ENCODE measurements at regions of chr12 and their contacts with region 1.

Region 1: DNA sequence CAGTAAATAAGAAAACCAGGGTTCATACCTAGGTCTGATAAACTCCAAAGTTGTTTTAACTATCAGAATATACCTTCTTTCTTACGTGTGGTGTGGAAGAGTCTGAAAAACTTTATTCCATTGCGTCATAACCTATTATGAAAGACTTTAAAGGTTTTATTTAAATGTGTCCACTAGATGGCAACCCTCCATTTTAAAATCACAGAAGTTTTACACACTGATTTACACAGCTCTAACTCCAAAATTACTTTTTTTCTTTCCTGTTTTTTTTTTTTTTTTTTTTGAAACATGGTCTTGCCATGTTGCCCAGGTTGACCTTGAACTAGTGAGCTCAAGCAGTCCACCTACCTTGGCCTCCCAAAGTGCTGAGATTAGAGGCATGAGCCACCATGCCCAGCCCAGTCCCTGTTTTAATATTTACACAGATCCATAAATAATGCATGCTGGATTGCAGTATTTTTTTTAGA is 17.3 kb upstream of the TMPRSS12 start:
- DNase-seq: no peak
- ATAC-seq: peak; percentile 80
- H3K4me3 Mint-ChIP-seq: no peak overlapping the region
- H3K27ac Mint-ChIP-seq: no peak overlapping the region
- H3K4me1 Mint-ChIP-seq: peaks cover 6% of the 10 kb centered on the region
- H3K27me3 Mint-ChIP-seq: no peaks in the 10 kb centered on the region
- CTCF ChIP-seq: no peak

Region 2: DNA sequence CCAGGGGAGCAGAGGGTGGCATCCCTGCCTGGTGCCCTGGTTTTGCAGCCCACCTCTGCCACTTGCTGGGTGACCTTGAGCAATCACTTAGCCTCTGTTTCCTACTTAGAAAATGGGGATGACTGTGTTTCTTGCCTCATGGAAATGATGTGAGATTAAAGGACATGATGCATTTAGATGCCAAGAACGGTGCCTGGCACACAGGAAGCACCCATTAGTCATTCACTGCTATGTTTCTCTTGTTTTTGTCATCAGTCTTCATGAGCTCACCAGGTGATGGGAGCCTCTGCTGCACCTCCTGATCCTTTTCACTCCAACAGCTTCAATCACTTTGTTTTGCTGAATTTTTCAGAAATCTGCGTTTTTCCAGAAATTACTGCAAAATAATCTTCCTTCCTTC is 85.1 kb before region 1 on chr12:
- CTCF ChIA-PET with region 1: no interaction called
- POLR2A ChIA-PET with region 1: no interaction called
- intact Hi-C with region 1: no loop called
- DNase-seq: no peak
- ATAC-seq: no peak
- H3K4me3 Mint-ChIP-seq: no peak overlapping the region
- H3K27ac Mint-ChIP-seq: no peak overlapping the region
- H3K4me1 Mint-ChIP-seq: no peaks in the 10 kb centered on the region
- H3K27me3 Mint-ChIP-seq: no peaks in the 10 kb centered on the region
- CTCF ChIP-seq: no peak

Region 3: DNA sequence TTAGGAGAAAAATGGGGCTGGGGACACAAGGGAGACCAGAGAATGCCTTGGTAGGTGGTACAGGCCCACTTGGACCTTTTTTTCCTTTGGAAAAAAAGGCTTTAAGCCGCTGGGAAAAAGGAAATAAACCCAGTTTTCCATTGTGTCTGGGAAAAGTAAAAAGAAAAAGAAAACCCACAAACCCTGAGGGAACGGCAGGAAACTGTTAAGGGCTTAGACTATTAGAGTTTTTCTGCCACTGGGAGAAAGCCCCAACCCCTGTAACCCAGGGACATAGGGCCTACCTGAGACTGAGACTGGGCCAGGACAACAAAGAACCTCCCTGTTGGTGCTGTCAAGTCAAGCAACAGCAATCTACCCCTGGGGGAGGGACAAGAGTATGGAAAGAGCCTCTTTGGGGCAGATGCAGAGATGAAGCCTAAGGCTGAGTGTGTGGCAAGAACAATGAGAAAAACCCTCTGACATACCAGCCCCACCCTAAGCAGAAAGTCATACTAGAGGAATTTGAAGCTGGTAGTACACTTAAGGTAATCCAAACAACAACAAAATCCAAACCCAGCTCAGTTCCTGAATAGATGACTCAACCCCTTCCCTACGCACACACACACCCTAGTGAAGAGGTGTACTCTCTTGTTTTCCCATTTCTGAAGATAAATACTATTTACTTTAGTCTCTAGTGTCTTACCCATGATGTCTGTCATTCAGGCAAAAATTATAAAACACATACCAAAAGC is 38.7 kb before region 1 on chr12:
- CTCF ChIA-PET with region 1: no interaction called
- POLR2A ChIA-PET with region 1: no interaction called
- intact Hi-C with region 1: no loop called
- DNase-seq: no peak
- ATAC-seq: no peak
- H3K4me3 Mint-ChIP-seq: no peak overlapping the region
- H3K27ac Mint-ChIP-seq: no peak overlapping the region
- H3K4me1 Mint-ChIP-seq: peaks cover 8% of the 10 kb centered on the region
- H3K27me3 Mint-ChIP-seq: no peaks in the 10 kb centered on the region
- CTCF ChIP-seq: no peak

Region 4: GRCh38 chr12:50799908-50800307 is 25.5 kb before region 1 on chr12:
- CTCF ChIA-PET with region 1: no interaction called
- POLR2A ChIA-PET with region 1: no interaction called
- intact Hi-C with region 1: no loop called
- DNase-seq: no peak
- ATAC-seq: no peak
- H3K4me3 Mint-ChIP-seq: no peak overlapping the region
- H3K27ac Mint-ChIP-seq: no peak overlapping the region
- H3K4me1 Mint-ChIP-seq: no peaks in the 10 kb centered on the region
- H3K27me3 Mint-ChIP-seq: no peaks in the 10 kb centered on the region
- CTCF ChIP-seq: no peak

Region 5: GRCh38 chr12:50986966-50987737 is 161.7 kb after region 1 on chr12:
- CTCF ChIA-PET with region 1: interaction called, 205 read pairs
- POLR2A ChIA-PET with region 1: interaction called, 16 read pairs
- intact Hi-C with region 1: loop called (anchors 1 kb)
- DNase-seq: no peak
- ATAC-seq: peak; percentile 72
- H3K4me3 Mint-ChIP-seq: no peak overlapping the region
- H3K27ac Mint-ChIP-seq: no peak overlapping the region
- H3K4me1 Mint-ChIP-seq: peaks cover 5% of the 10 kb centered on the region
- H3K27me3 Mint-ChIP-seq: no peaks in the 10 kb centered on the region
- CTCF ChIP-seq: no peak

Region 6: DNA sequence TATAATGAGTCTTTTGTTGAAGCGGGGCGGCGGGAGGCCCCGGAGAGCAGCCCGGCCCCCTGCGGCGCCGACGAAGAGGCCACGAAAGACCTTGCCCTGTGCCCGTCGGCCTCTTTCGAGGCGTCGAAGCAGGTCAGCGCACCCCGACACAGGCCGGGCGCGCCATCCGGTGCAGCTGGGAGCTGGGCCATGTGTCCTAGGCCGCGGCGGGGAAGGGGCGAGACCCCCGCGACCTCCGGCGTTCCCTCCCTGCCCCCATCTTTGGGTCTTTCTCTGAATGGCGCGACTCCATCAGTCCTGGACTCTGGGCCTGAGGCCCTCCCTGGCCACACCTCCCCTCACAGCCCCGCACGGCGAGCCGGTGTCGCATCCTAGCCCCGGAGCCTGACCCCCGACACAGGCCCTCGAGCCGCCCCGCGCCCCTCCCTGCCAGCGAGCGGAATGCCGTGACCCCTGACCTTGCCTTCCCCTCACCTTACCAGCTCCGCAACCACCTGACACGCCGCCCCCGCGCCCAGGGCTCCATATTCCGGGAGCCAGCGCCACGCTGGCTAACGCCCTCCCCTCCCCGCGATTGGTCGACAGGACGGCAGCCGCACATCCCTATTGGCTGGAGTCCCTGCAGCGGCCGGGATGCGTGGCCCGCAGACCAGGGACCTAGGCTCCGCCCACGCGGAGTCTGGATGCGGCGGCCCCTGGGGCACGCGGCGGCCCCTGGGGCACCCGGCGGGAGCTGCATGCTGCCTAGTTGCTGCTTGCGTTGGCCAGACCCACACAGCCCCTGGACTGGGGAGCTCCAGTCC is 200.6 kb after region 1 on chr12 and contains the start of gene SLC11A2:
- CTCF ChIA-PET with region 1: interaction called, 23 read pairs
- POLR2A ChIA-PET with region 1: interaction called, 4 read pairs
- intact Hi-C with region 1: loop called (anchors 1 kb)
- DNase-seq: peak; percentile 86
- ATAC-seq: peak; percentile 98
- H3K4me3 Mint-ChIP-seq: peak within 1 kb of the TSS; percentile 99
- H3K27ac Mint-ChIP-seq: peak within 1 kb of the TSS; percentile 93
- H3K4me1 Mint-ChIP-seq: peaks cover 42% of the 10 kb centered on the region
- H3K27me3 Mint-ChIP-seq: no peaks in the 10 kb centered on the region
- CTCF ChIP-seq: no peak
- total RNA-seq, gene SLC11A2: 32.3 and 44.6 TPM in 2 replicates

Region 7: DNA sequence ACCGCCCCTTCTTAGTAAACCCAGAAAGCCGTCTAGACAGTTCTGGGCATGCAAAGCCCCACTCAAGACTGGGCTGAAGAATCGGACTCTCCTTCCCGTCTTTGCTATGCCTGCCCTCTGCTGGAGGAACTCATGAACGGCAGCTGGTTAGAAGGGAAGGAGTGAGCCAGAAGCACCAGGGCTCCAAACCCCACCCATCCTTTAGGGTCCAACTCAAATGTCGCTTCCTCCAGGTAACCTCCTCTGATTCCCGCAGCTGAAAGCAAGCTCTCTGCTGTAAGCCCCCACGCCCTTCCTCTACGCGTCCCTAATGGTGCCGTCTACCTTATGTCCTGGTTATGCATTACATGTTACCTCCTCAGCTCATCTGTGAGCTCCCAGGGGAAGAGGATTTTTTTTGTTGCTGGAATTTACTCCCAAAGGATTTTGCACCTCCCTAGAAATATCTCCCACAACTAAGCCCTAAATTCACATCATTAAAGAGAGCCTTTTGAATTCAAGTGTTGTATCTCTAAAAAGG is 706.6 kb after region 1 on chr12:
- CTCF ChIA-PET with region 1: no interaction called
- POLR2A ChIA-PET with region 1: no interaction called
- intact Hi-C with region 1: loop called (anchors 10 kb)
- DNase-seq: peak; percentile 56
- ATAC-seq: peak; percentile 97
- H3K4me3 Mint-ChIP-seq: no peak overlapping the region
- H3K27ac Mint-ChIP-seq: no peak overlapping the region
- H3K4me1 Mint-ChIP-seq: peaks cover 11% of the 10 kb centered on the region
- H3K27me3 Mint-ChIP-seq: peaks cover 28% of the 10 kb centered on the region
- CTCF ChIP-seq: peak; percentile 51

Measured in activated B cell treated with CpG ODN at 0.5 μM for 24 hours (primary cell).